ENCODE measurements at regions of chr6 and their contacts with region 1.

Region 1: DNA sequence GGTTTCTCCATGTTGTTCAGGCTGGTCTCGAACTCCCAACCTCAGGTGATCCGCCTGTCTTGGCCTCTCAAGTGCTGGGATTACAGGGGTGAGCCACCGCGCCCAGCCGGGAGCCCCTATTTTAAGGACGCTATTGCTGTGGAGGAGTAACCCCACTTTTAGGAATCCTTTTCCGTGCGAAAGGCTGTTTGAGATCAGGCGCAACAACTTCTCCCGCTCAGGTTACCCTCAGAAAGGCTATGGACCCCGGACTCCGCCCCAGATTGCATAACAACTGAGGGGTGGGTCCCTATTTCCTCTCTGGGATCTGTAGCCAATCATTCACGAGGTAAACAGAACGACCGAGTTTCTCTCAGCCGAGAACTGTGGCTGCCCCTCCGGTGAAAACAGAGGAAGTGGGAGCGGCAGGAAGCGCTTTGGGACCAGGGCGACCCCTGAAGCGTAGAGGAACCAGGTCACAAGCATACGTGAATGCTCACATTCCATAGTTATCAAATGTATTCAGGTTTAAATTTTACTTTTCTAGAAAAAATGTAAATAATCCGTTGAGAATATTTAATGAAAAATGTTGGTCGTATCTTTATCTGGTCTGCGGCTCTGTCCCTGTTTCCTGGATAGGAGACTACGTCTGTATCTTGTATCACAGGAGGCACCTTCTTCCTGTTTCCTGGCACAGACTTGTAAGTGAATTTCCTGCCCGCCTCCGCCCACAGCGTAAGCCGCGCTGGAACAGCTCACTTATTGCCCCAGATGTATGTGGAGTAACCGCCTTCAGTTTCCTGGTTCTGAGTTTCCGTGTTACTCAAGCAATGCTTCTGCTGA is 26.8 kb downstream of the HLA-E start:
- DNase-seq: peak; percentile 89 to 97
- H3K4me3 ChIP-seq: peak overlapping the region; percentile 43 to 58
- H3K27ac ChIP-seq: peak overlapping the region; percentile 66 to 76
- H3K4me1 ChIP-seq: peaks cover 0 to 3% of the 10 kb centered on the region in 2 donors
- H3K27me3 ChIP-seq: no peaks in the 10 kb centered on the region
- CTCF ChIP-seq: no peak

Region 2: GRCh38 chr6:30489081-30490025 is 26.8 kb before region 1 on chr6 and contains the start of gene HLA-E:
- intact Hi-C with region 1: loop called (anchors 2 kb)
- DNase-seq: peak; percentile 90 to 99
- H3K4me3 ChIP-seq: peak within 1 kb of the TSS; percentile 91 to 97
- H3K27ac ChIP-seq: peak within 1 kb of the TSS; percentile 98 to 99
- H3K4me1 ChIP-seq: peaks cover 6 to 14% of the 10 kb centered on the region in 2 donors
- H3K27me3 ChIP-seq: no peaks in the 10 kb centered on the region
- CTCF ChIP-seq: no peak
- total RNA-seq, gene HLA-E: 896 TPM

Region 3: GRCh38 chr6:30770592-30770991 is 254.4 kb after region 1 on chr6:
- intact Hi-C with region 1: no loop called
- DNase-seq: no peak
- H3K4me3 ChIP-seq: no peak overlapping the region
- H3K27ac ChIP-seq: no peak overlapping the region
- H3K4me1 ChIP-seq: peaks cover 7 to 10% of the 10 kb centered on the region in 2 donors
- H3K27me3 ChIP-seq: no peaks in the 10 kb centered on the region
- CTCF ChIP-seq: no peak

Region 4: GRCh38 chr6:30781743-30782424 is 265.7 kb after region 1 on chr6:
- intact Hi-C with region 1: no loop called
- DNase-seq: peak; percentile 83 to 98
- H3K4me3 ChIP-seq: peak overlapping the region in 1 of 2 donors; percentile 2
- H3K27ac ChIP-seq: peak overlapping the region; percentile 90 to 94
- H3K4me1 ChIP-seq: peaks cover 13 to 45% of the 10 kb centered on the region in 2 donors
- H3K27me3 ChIP-seq: no peaks in the 10 kb centered on the region
- CTCF ChIP-seq: no peak

Measured in ascending aorta (tissue), 2 donors.